Gastrocnemius medialis (tissue), 4 donors: ENCODE measurements at regions of chr10 and their contacts with region 1.

Region 1: GRCh38 chr10:59625721-59626522 is 83.7 kb downstream of the SLC16A9 start:
- DNase-seq: peak; percentile 24 to 26
- ATAC-seq: peak; percentile 89 to 93
- H3K4me3 ChIP-seq: no peak overlapping the region
- H3K27ac ChIP-seq: no peak overlapping the region
- H3K4me1 ChIP-seq: no peaks in the 10 kb centered on the region
- H3K27me3 ChIP-seq: no peaks in the 10 kb centered on the region
- CTCF ChIP-seq: peak; percentile 76 to 86 (median 84)
- POLR2A ChIP-seq: no peak

Region 2: GRCh38 chr10:58952747-58953466 is 673.0 kb before region 1 on chr10:
- in situ Hi-C with region 1: loop called in 3 of 4 experiments (anchors 10 to 25 kb)
- intact Hi-C with region 1: loop called (anchors 2 kb)
- DNase-seq: peak in 1 of 2 donors; percentile 18
- ATAC-seq: peak; percentile 46 to 59
- H3K4me3 ChIP-seq: no peak overlapping the region
- H3K27ac ChIP-seq: peak overlapping the region; percentile 33 to 53 (median 46)
- H3K4me1 ChIP-seq: peaks cover 6 to 31% of the 10 kb centered on the region in 2 donors
- H3K27me3 ChIP-seq: no peaks in the 10 kb centered on the region
- CTCF ChIP-seq: peak; percentile 61 to 83 (median 73)
- POLR2A ChIP-seq: no peak

Region 3: DNA sequence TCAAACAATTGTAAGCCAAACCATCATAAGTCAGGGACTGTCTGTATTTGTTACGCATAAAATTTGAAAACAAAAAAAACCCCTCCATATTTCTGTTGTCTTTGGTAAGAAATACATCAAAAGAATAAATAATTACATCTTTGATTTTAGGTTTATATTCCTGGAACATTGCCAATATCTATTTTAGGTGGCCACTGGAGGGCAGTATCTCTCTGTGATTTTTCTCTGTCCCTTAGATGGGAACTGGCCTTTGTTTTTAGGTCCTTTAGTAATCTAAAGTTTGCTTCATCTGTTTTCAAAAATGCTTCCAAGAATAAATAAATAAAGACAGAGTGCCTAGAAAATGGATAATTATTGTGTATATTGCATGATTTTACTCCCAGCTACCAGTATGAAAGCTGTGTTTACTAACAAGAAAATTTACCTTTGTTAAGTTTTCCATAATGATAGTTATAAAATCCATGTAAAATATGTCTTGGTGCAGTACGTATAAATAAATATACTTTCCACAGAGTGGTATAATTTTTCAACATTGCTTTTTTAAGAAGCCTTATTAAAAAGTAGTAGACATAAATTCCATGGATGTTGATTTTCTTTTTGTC is 385.2 kb before region 1 on chr10:
- in situ Hi-C with region 1: loop called (anchors 5 to 25 kb)
- intact Hi-C with region 1: loop called (anchors 1 kb)
- DNase-seq: no peak
- ATAC-seq: peak in 1 of 2 donors; percentile 48
- H3K4me3 ChIP-seq: no peak overlapping the region
- H3K27ac ChIP-seq: peak overlapping the region in 1 of 4 donors; percentile 9
- H3K4me1 ChIP-seq: peaks cover 0 to 8% of the 10 kb centered on the region in 2 donors
- H3K27me3 ChIP-seq: no peaks in the 10 kb centered on the region
- CTCF ChIP-seq: peak; percentile 69 to 81 (median 70)
- POLR2A ChIP-seq: no peak

Region 4: GRCh38 chr10:59808896-59809643 is 183.1 kb after region 1 on chr10:
- in situ Hi-C with region 1: loop called (anchors 5 to 10 kb)
- intact Hi-C with region 1: loop called (anchors 1 kb)
- DNase-seq: peak; percentile 82 to 87
- ATAC-seq: peak; percentile 83 to 88
- H3K4me3 ChIP-seq: no peak overlapping the region
- H3K27ac ChIP-seq: peak overlapping the region; percentile 61 to 86 (median 66)
- H3K4me1 ChIP-seq: peaks cover 24 to 33% of the 10 kb centered on the region in 2 donors
- H3K27me3 ChIP-seq: no peaks in the 10 kb centered on the region
- CTCF ChIP-seq: peak; percentile 71 to 85 (median 81)
- POLR2A ChIP-seq: no peak

Region 5: GRCh38 chr10:59906417-59907202 is 280.7 kb after region 1 on chr10 and contains the start of gene CCDC6:
- in situ Hi-C with region 1: loop called in 1 of 4 experiments (anchors 10 kb)
- intact Hi-C with region 1: loop called (anchors 5 kb)
- DNase-seq: peak; percentile 90 to 92
- ATAC-seq: peak; percentile 86
- H3K4me3 ChIP-seq: peak within 1 kb of the TSS; percentile 81 to 98 (median 92)
- H3K27ac ChIP-seq: peak within 1 kb of the TSS; percentile 89 to 92 (median 90)
- H3K4me1 ChIP-seq: peaks cover 34 to 48% of the 10 kb centered on the region in 2 donors
- H3K27me3 ChIP-seq: no peaks in the 10 kb centered on the region
- CTCF ChIP-seq: peak; percentile 80 to 91 (median 81)
- POLR2A ChIP-seq: peak; percentile 84 to 88
- total RNA-seq, gene CCDC6: 26.6 to 43.3 (median 29.5) TPM

Region 6: GRCh38 chr10:60434418-60435046 is 808.6 kb after region 1 on chr10:
- in situ Hi-C with region 1: no loop called
- intact Hi-C with region 1: loop called (anchors 10 kb)
- DNase-seq: no peak
- ATAC-seq: no peak
- H3K4me3 ChIP-seq: no peak overlapping the region
- H3K27ac ChIP-seq: no peak overlapping the region
- H3K4me1 ChIP-seq: peaks cover 0 to 5% of the 10 kb centered on the region in 2 donors
- H3K27me3 ChIP-seq: no peaks in the 10 kb centered on the region
- CTCF ChIP-seq: peak in 4 of 5 experiments; percentile 54 to 61 (median 60)
- POLR2A ChIP-seq: no peak